ENCODE measurements at regions of chr4 and their contacts with region 1.

Region 1: DNA sequence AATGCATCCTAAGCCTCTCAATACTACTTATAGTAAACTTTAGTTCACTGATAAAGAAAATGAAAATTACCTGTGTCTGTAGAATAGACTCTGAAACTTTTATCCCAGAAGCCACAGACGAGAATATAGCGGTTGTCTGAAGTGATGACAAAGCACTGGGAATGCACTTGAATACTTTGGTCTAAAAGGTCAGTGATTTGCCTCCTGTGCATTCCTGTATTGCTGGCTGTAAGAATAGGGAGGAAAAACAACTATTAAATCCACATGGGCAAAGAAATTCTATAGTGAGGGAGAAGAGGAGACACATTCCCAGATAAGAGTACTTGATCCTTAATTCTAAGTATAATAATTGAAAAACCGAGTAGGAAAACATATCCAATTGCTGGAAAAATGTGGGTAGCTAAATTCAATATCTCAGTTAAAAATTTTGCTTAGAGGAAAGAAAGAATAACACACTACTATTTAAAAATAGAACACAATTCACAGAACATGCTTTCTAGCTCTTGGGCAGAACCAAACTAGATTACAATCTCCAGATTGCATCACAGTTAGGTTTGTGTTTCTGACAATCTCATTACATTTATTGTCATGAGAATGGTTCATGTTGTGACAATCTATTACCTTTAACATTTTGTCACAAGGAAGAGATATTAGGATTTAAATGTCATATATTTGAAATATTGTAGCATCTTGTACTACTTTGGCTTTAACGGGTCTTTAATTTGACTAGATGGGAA is 232.1 kb downstream of the DCLK2 start:
- DNase-seq: no peak

Region 2: GRCh38 chr4:150108691-150109090 is 201.6 kb before region 1 on chr4:
- intact Hi-C with region 1: no loop called
- DNase-seq: no peak

Region 3: GRCh38 chr4:150583287-150584110 is 273.2 kb after region 1 on chr4:
- intact Hi-C with region 1: loop called (anchors 10 kb)
- DNase-seq: no peak